H1 (cell line): ENCODE measurements at regions of chr12 and their contacts with region 1.

Region 1: GRCh38 chr12:9760699-9761418 is at the start of gene CD69:
- DNase-seq: no peak
- H3K4me3 ChIP-seq: no peak within 1 kb of the TSS
- H3K27ac ChIP-seq: no peak within 1 kb of the TSS
- H3K4me1 ChIP-seq: peaks cover 0 to 4% (median 0%) of the 10 kb centered on the region in 4 experiments; a peak in 1 of 7 replicates
- H3K27me3 ChIP-seq: no peaks in the 10 kb centered on the region
- CTCF ChIP-seq: no peak
- EP300 ChIP-seq: no peak
- POLR2A ChIP-seq: no peak
- RAD21 ChIP-seq: no peak
- total RNA-seq, gene CD69: not detected in 2 replicates

Region 2: DNA sequence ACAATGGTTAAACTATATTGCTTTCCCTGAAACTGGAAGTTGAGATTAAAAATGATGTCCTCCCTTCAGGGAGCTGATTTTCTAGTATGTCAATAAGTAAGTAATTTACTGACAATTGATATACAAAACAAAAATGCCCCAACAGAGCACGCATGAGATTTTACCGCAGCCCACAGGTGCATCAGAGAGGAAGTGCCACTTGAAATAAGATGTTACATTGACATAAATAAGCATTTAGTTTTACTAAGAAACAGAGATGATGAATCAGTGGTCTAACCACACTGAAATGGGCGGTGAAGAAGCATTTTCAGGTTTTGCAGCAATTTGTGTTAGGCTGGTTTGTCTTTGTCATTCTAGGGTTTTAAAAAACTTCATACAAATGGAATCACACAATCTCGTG is 19.1 kb before region 1 on chr12:
- CTCF ChIA-PET with region 1: interaction called, 12 read pairs
- POLR2A ChIA-PET with region 1: no interaction called
- DNase-seq: no peak
- H3K4me3 ChIP-seq: no peak overlapping the region
- H3K27ac ChIP-seq: no peak overlapping the region
- H3K4me1 ChIP-seq: no peaks in the 10 kb centered on the region
- H3K27me3 ChIP-seq: no peaks in the 10 kb centered on the region
- CTCF ChIP-seq: no peak
- EP300 ChIP-seq: no peak
- POLR2A ChIP-seq: no peak
- RAD21 ChIP-seq: no peak

Region 3: GRCh38 chr12:9797722-9798619 is 37.1 kb after region 1 on chr12:
- CTCF ChIA-PET with region 1: interaction called, 278 read pairs
- POLR2A ChIA-PET with region 1: no interaction called
- DNase-seq: peak in 1 of 2 experiments; percentile 43
- H3K4me3 ChIP-seq: no peak overlapping the region
- H3K27ac ChIP-seq: no peak overlapping the region
- H3K4me1 ChIP-seq: no peaks in the 10 kb centered on the region; a peak in 1 of 7 replicates
- H3K27me3 ChIP-seq: no peaks in the 10 kb centered on the region
- CTCF ChIP-seq: peak; percentile 53 to 95 (median 94)
- EP300 ChIP-seq: peak in 1 of 2 experiments; percentile 67; a peak in 1 of 3 replicates
- POLR2A ChIP-seq: no peak
- RAD21 ChIP-seq: peak; percentile 98 to 99